Posterior vena cava (tissue), 2 donors: ENCODE measurements at regions of chr1 and their contacts with region 1.

Region 1: DNA sequence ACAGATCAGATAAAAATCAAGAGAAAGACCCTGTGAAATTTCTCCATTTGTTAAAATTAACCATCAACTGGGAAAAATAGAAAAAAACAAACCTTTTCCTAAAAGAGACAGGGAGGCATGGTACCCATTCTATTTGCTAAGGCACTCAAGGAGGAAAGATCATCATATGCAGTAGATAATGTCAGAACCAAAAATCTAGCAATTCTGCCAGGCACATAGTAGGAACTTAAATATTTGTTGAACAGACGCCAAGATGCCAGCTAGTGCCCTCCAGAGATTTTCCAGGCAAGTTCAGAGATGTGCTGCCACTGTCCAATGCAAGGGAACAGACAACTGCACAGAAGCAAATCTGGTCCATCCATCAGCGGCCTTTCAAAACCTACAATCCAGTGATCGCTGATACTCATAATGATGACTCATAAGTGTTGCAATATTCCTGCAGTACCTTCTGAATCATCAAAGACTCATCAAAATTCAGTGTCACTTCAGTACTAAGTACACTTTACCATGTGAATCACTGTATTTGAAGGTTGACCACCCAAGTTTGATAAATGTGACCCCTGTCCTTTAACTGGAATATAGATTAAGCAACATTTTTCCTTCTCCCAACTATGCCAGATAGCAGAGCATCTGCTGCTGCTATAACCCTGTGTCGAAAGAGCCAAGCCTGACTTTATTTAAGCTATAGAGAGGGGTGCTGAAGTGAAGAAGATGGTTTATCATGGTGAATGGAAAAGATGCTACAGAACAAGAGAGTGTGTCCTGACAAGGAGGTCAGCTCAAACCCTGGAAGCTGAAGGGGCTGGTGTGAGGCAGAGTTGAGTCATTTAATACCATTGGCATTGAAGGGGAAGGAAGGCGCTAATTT is 99.1 kb downstream of the MT1HL1 start:
- DNase-seq: no peak

Region 2: GRCh38 chr1:235601104-235601503 is 1304.0 kb before region 1 on chr1:
- intact Hi-C with region 1: no loop called
- DNase-seq: no peak

Region 3: DNA sequence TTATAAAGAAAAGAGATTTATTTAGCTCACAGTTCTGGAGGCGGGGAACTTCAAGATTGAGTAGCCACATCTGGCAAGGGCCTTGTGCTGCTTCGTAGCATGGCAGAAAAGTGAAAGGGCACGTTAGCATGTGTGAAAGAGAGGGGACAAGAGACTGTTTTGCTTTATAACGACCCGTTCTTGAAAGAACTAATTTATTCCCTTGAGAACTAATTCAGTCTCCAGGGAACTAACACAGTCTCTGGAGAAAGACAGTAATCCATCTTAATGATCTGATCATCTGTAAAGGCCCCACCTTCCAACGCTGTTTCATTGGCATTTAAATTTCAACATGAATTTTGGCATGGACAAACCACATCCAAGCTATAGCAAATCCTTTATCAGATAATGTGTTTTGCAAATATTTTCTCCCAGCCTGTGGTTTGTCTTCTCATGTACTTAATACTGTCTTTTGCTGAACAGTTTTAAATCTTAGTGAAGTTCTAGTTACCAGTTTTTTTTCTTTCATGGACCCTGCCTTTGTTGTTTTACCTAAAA is 83.9 kb before region 1 on chr1:
- intact Hi-C with region 1: no loop called
- DNase-seq: no peak

Region 4: GRCh38 chr1:237166593-237167101 is 261.5 kb after region 1 on chr1:
- intact Hi-C with region 1: loop called in 1 of 2 experiments (anchors 5 kb)
- DNase-seq: no peak